Mammary epithelial cell (primary cell): ENCODE measurements at regions of chr1 and their contacts with region 1.

Region 1: GRCh38 chr1:70487910-70488665 is 77.0 kb downstream of the CTH start:
- DNase-seq: peak; percentile 33
- H3K4me3 ChIP-seq: no peak overlapping the region
- H3K27ac ChIP-seq: no peak overlapping the region
- H3K4me1 ChIP-seq: peaks cover 19% of the 10 kb centered on the region
- H3K27me3 ChIP-seq: no peaks in the 10 kb centered on the region
- CTCF ChIP-seq: peak; percentile 84 to 85

Region 2: GRCh38 chr1:69947837-69948236 is 540.3 kb before region 1 on chr1:
- CTCF ChIA-PET with region 1: no interaction called
- dilution Hi-C with region 1: no loop called
- in situ Hi-C with region 1: no loop called
- intact Hi-C with region 1: no loop called
- DNase-seq: peak; percentile 80
- H3K4me3 ChIP-seq: no peak overlapping the region
- H3K27ac ChIP-seq: no peak overlapping the region
- H3K4me1 ChIP-seq: peaks cover 7% of the 10 kb centered on the region
- H3K27me3 ChIP-seq: no peaks in the 10 kb centered on the region
- CTCF ChIP-seq: no peak

Region 3: GRCh38 chr1:70134148-70134547 is 353.9 kb before region 1 on chr1:
- CTCF ChIA-PET with region 1: no interaction called
- dilution Hi-C with region 1: no loop called
- in situ Hi-C with region 1: loop called in 1 of 2 experiments (anchors 10 kb)
- intact Hi-C with region 1: loop called (anchors 1 kb)
- DNase-seq: no peak
- H3K4me3 ChIP-seq: no peak overlapping the region
- H3K27ac ChIP-seq: no peak overlapping the region
- H3K4me1 ChIP-seq: no peaks in the 10 kb centered on the region
- H3K27me3 ChIP-seq: no peaks in the 10 kb centered on the region
- CTCF ChIP-seq: no peak

Region 4: DNA sequence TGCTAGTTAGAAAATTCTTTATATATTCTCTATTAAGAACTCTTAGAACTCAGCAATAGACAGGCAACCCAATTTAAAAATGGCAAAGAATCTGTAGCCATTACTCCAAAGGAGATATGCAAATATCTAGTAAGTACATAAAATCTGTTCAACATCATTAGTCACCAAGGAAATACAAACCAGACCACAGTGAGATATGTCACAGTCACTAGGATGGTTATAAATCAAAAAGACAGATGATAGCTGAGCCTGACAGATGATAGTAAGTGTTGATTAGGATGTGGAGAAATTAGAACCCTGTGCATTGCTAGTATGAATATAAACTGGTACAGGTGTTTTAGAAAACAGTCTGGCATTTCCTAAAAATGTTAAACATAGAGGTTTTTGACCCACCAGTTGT is 240.3 kb before region 1 on chr1:
- CTCF ChIA-PET with region 1: no interaction called
- dilution Hi-C with region 1: no loop called
- in situ Hi-C with region 1: no loop called
- intact Hi-C with region 1: loop called (anchors 1 kb)
- DNase-seq: no peak
- H3K4me3 ChIP-seq: no peak overlapping the region
- H3K27ac ChIP-seq: no peak overlapping the region
- H3K4me1 ChIP-seq: no peaks in the 10 kb centered on the region
- H3K27me3 ChIP-seq: no peaks in the 10 kb centered on the region
- CTCF ChIP-seq: no peak

Region 5: DNA sequence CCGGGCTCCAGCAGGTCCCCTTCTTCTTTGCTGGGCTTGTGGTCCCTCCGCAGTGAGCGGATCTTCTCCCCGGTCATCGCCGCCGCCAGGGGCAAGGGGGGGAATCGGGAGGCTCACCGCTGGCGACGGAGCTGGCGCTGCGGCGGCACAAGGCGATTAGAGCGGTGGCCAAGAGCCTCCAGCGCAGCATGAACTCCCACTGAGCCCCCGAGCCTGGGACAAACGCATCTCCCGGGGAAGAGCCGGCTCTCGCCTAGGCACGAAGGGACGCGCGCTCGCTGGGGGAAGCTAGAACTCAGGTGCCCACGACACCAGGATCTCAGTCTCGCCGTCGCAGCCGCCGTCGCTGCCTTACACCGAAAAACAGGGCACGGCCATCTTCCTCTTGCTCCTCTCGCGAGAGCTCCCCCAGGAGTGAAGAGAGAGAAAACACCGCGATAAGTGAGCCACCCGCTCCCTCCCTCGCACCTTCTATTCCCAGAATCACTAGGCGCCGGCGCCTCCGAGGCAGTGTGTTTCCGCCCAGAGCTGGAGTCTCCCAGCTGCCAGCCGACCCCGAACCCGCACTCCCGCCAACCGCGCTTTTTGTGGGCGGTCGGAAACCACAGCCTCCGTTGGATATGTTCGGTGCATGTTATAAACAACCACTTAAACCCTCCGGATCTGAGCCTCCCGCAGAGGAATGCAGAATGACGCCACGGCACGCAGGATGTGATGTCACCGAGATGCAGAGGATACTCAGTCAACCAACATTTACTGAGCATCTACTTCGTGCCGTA is 133.6 kb before region 1 on chr1 and contains the start of gene ANKRD13C:
- CTCF ChIA-PET with region 1: interaction called, 6 read pairs
- dilution Hi-C with region 1: no loop called
- in situ Hi-C with region 1: no loop called
- intact Hi-C with region 1: loop called (anchors 5 kb)
- DNase-seq: peak; percentile 93
- H3K4me3 ChIP-seq: peak within 1 kb of the TSS; percentile 82 to 99 (median 94)
- H3K27ac ChIP-seq: peak within 1 kb of the TSS; percentile 88
- H3K4me1 ChIP-seq: peaks cover 25% of the 10 kb centered on the region
- H3K27me3 ChIP-seq: no peaks in the 10 kb centered on the region
- CTCF ChIP-seq: no peak
- total RNA-seq, gene ANKRD13C: 16.7 to 24.0 TPM

Region 6: DNA sequence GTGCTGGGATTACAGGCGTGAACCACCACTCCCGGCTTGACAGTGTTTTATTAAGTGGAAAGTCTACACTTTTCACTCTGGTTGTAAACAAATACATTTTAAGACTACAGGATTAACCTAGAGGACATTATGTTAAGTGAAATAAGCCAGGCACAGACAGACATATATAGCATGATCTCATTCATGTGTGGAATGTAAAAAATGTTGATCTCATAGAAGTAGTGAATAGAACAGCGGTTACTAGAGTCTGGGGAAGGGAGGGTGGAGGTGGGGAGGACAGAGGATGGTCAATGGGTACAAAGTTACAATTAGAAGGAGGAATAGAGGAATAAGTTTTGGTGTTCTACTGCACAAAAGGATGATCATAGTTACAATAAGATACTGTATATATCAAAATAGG is 60.1 kb before region 1 on chr1:
- CTCF ChIA-PET with region 1: no interaction called
- dilution Hi-C with region 1: no loop called
- in situ Hi-C with region 1: no loop called
- intact Hi-C with region 1: loop called (anchors 5 kb)
- DNase-seq: no peak
- H3K4me3 ChIP-seq: no peak overlapping the region
- H3K27ac ChIP-seq: no peak overlapping the region
- H3K4me1 ChIP-seq: peaks cover 15% of the 10 kb centered on the region
- H3K27me3 ChIP-seq: no peaks in the 10 kb centered on the region
- CTCF ChIP-seq: no peak